ENCODE measurements at regions of chr14 and their contacts with region 1.

Region 1: GRCh38 chr14:52318062-52318461 is 4.0 kb downstream of the PTGER2 start:
- DNase-seq: peak in 1 of 35 experiments; percentile 44
- ATAC-seq: no peak
- H3K4me3 ChIP-seq: peak overlapping the region in 1 of 2 donors; percentile 81
- H3K4me3 Mint-ChIP-seq: peak overlapping the region; percentile 99 to 100 (median 99)
- H3K27ac ChIP-seq: peak overlapping the region; percentile 72
- H3K27ac Mint-ChIP-seq: peak overlapping the region; percentile 79 to 87
- H3K4me1 ChIP-seq: peaks cover 16 to 19% of the 10 kb centered on the region in 2 experiments
- H3K4me1 Mint-ChIP-seq: peaks cover 66 to 83% (median 76%) of the 10 kb centered on the region in 3 donors
- H3K27me3 ChIP-seq: peaks cover 0 to 7% of the 10 kb centered on the region in 2 experiments
- H3K27me3 Mint-ChIP-seq: peaks cover 0 to 6% of the 10 kb centered on the region in 2 donors

Region 2: GRCh38 chr14:51939727-51940390 is 378.2 kb before region 1 on chr14:
- CTCF ChIA-PET with region 1: no interaction called
- POLR2A ChIA-PET with region 1: interaction called in 1 of 2 experiments, 10 read pairs
- DNase-seq: no peak
- ATAC-seq: no peak
- H3K4me3 ChIP-seq: no peak overlapping the region
- H3K4me3 Mint-ChIP-seq: no peak overlapping the region
- H3K27ac ChIP-seq: no peak overlapping the region
- H3K27ac Mint-ChIP-seq: peak overlapping the region; percentile 12 to 72
- H3K4me1 ChIP-seq: peaks cover 0 to 26% of the 10 kb centered on the region in 2 experiments
- H3K4me1 Mint-ChIP-seq: peaks cover 47 to 72% (median 65%) of the 10 kb centered on the region in 3 donors
- H3K27me3 ChIP-seq: no peaks in the 10 kb centered on the region
- H3K27me3 Mint-ChIP-seq: no peaks in the 10 kb centered on the region

Measured in T-cell (primary cell).